ENCODE measurements at regions of chr18 and their contacts with region 1.

Region 1: DNA sequence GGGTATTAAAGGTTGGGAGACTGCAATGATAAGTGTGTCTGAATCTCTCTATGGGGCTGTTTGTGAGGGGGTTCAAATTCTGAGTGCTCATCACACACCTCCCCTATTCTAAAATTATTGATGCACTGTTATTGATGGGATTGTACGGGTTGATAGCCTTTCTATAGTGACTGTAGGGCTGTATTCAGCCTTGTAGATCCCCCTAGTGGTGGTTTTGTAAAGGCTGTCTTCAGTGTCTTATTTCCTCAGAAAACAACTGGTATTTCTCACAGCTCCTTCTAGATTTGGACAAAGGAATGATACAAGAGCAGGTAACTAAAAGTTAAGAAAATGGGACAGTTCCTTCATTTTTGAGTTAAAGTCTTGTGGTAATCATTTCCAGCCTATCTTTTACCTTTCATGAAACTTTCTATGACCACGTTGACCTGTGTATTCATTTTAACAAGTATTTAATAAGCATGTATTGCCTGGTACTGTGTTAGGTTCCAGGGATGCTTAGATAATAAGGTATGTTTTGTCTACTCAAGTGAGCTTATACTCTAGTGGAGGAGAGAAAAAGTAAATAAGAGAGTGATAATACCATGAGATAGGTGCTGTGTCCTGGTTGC is 21.2 kb downstream of the SMAD4 start:
- H3K4me3 Mint-ChIP-seq: no peak overlapping the region
- H3K27ac Mint-ChIP-seq: no peak overlapping the region
- H3K4me1 Mint-ChIP-seq: peaks cover 11% of the 10 kb centered on the region
- H3K27me3 Mint-ChIP-seq: no peaks in the 10 kb centered on the region

Region 2: DNA sequence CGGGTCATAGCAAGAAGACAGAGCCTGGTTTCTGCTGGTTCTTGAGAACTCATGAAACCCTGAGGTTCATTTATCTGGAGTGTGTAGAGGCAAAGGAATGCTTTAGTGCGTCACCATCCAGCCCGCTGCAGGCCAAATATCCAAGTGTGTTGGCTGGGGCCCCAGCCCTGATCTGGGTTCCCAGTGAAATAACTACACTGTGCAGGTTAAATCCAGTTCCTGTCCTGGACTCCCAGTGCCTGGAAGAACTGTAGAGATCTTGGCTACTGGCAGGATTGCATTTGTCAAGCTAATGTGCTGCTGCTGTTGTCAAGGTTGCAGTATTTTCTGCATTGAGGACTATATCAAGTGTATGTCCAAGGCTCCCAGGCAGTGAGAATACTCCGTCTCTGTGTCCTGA is 401.4 kb before region 1 on chr18:
- intact Hi-C with region 1: no loop called
- H3K4me3 Mint-ChIP-seq: no peak overlapping the region
- H3K27ac Mint-ChIP-seq: no peak overlapping the region
- H3K4me1 Mint-ChIP-seq: no peaks in the 10 kb centered on the region
- H3K27me3 Mint-ChIP-seq: peaks cover 1% of the 10 kb centered on the region

Region 3: DNA sequence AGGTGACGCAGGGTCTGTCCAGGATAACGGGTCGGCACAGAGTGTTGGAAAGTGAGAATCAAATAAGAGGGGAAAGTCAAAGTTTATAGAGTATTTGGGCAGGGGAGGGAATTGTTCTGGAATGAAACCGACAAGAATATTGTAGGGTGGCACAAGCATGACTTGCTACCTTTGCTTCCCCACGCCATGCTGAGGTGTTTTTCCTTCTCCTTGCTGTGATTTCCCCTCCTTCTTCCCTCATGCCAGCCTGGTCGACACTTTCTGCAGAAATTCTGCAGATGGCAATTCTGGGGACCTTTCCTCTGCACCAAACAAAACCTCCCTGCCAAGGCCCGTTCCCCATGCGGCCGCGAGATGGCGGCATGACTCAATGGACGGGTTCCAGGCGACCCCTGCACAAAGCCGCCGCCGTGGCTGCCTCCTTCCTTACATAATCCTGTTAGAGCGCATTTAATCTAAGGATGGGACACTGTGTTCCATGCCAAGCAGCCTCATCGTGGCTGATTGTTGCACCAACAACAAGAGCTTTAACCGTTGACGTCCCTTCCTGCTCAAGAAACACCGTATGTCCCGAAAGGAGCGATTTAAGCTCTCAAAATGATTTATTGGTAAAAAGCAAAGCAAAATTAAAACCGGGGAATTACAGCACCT is 231.4 kb before region 1 on chr18 and contains the start of gene MRO:
- intact Hi-C with region 1: loop called (anchors 2 kb)
- H3K4me3 Mint-ChIP-seq: no peak within 1 kb of the TSS
- H3K27ac Mint-ChIP-seq: no peak within 1 kb of the TSS
- H3K4me1 Mint-ChIP-seq: no peaks in the 10 kb centered on the region
- H3K27me3 Mint-ChIP-seq: peaks cover 5% of the 10 kb centered on the region

Region 4: DNA sequence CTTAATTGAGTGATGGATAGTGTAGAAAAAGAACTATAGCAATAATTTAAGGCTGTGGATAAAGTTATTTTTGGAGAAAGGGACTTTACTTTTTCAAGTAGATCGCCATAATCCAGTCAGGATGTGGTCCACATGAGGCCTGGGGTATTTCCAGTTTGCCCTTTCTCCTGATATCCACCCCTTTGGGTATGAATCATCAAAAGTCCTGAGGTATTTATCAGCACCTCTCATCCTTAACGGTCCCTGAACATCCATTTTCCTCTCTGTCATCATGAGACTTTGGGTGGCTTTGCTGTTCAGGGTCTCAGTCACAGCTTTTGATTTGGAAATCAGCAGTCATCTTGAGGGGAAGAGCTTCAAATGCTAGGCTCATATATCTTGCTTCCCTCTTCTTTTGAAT is 122.7 kb before region 1 on chr18:
- intact Hi-C with region 1: loop called (anchors 10 kb)
- H3K4me3 Mint-ChIP-seq: no peak overlapping the region
- H3K27ac Mint-ChIP-seq: no peak overlapping the region
- H3K4me1 Mint-ChIP-seq: no peaks in the 10 kb centered on the region
- H3K27me3 Mint-ChIP-seq: no peaks in the 10 kb centered on the region

Region 5: DNA sequence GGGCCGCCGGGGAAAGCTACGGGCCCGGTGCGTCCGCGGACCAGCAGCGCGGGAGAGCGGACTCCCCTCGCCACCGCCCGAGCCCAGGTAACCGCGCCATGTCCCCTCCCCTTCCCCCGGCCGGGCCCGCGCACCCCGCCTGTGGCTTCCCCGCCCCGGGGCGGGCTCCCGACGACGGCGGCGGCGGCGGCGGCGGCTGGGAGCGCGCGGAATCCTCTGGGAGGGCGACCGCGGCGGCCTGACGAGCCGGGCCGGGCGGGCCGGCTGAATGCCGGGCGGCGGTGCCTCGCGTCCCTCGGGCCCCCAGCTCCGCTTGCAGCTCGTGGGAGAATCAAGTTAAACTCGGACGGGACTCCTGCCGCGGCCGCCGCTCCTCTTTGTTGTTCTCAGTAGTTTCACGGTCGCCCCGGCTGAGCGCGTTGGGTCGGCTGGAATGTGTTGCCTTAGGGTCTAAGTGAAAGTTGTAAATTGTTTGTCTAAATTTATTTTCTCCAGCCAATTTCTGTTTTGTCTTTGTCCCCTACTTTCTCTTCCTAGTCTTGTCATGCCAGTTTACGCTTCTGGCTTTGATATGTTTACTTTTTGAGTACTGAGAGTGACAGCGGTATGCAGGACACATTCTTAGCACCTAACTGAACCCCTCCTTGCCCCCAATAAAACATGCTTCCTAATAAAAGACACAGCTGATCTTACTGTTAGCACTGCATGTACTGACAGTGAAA is 20.5 kb before region 1 on chr18:
- intact Hi-C with region 1: no loop called
- H3K4me3 Mint-ChIP-seq: peak overlapping the region; percentile 83
- H3K27ac Mint-ChIP-seq: peak overlapping the region; percentile 97
- H3K4me1 Mint-ChIP-seq: peaks cover 57% of the 10 kb centered on the region
- H3K27me3 Mint-ChIP-seq: no peaks in the 10 kb centered on the region

Region 6: GRCh38 chr18:51188024-51188701 is 137.0 kb after region 1 on chr18:
- intact Hi-C with region 1: no loop called
- H3K4me3 Mint-ChIP-seq: no peak overlapping the region
- H3K27ac Mint-ChIP-seq: no peak overlapping the region
- H3K4me1 Mint-ChIP-seq: peaks cover 30% of the 10 kb centered on the region
- H3K27me3 Mint-ChIP-seq: no peaks in the 10 kb centered on the region